ENCODE measurements at regions of chr16 and their contacts with region 1.

Region 1: GRCh38 chr16:80526425-80527061 is 14.2 kb upstream of the DYNLRB2 start:
- DNase-seq: peak; percentile 20
- ATAC-seq: peak; percentile 86
- H3K4me3 Mint-ChIP-seq: no peak overlapping the region
- H3K27ac Mint-ChIP-seq: no peak overlapping the region
- H3K4me1 Mint-ChIP-seq: no peaks in the 10 kb centered on the region
- H3K27me3 Mint-ChIP-seq: no peaks in the 10 kb centered on the region
- CTCF ChIP-seq: peak; percentile 90

Region 2: GRCh38 chr16:79997257-79997656 is 529.3 kb before region 1 on chr16:
- CTCF ChIA-PET with region 1: no interaction called
- POLR2A ChIA-PET with region 1: no interaction called
- intact Hi-C with region 1: loop called (anchors 5 kb)
- DNase-seq: no peak
- ATAC-seq: no peak
- H3K4me3 Mint-ChIP-seq: no peak overlapping the region
- H3K27ac Mint-ChIP-seq: no peak overlapping the region
- H3K4me1 Mint-ChIP-seq: no peaks in the 10 kb centered on the region
- H3K27me3 Mint-ChIP-seq: no peaks in the 10 kb centered on the region
- CTCF ChIP-seq: no peak

Region 3: GRCh38 chr16:80766798-80767197 is 240.3 kb after region 1 on chr16:
- CTCF ChIA-PET with region 1: no interaction called
- POLR2A ChIA-PET with region 1: no interaction called
- intact Hi-C with region 1: no loop called
- DNase-seq: no peak
- ATAC-seq: no peak
- H3K4me3 Mint-ChIP-seq: no peak overlapping the region
- H3K27ac Mint-ChIP-seq: no peak overlapping the region
- H3K4me1 Mint-ChIP-seq: no peaks in the 10 kb centered on the region
- H3K27me3 Mint-ChIP-seq: no peaks in the 10 kb centered on the region
- CTCF ChIP-seq: no peak

Region 4: DNA sequence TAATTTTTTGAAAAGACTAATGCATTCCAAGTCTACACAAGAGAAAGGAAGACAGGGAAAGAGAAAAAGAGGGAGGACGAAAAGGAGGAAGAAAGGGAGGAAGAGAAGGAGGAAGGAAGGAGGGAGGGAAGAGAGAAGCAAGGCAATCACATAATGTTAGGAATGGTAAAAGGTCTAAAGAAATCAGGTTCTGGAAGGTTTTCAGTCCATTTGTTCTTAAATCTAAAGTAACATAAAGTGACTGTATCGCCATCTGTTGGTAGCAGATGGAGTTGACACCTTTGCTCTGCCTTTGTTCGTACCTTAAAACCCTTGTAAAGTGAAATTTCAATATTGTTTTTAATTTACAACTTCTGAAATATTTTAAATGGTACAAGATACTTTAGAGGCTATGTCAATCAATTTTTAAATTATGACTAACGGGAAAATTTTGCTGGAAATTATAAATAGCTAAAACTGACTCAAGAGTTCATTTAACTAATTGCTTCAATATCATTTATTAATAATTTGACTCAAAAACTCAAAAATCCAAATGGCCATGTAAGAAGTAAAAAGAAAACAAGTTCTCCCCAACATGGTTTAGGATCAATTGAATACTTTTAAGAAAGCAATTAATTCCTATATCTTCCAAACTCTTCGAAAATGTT is 298.3 kb after region 1 on chr16:
- CTCF ChIA-PET with region 1: interaction called, 25 read pairs
- POLR2A ChIA-PET with region 1: no interaction called
- intact Hi-C with region 1: loop called (anchors 1 kb)
- DNase-seq: no peak
- ATAC-seq: no peak
- H3K4me3 Mint-ChIP-seq: no peak overlapping the region
- H3K27ac Mint-ChIP-seq: no peak overlapping the region
- H3K4me1 Mint-ChIP-seq: peaks cover 5% of the 10 kb centered on the region
- H3K27me3 Mint-ChIP-seq: peaks cover 2% of the 10 kb centered on the region
- CTCF ChIP-seq: peak; percentile 41

Measured in activated B cell treated with CpG ODN at 0.5 μM for 24 hours (primary cell).